ENCODE measurements at regions of chr6 and their contacts with region 1.

Region 1: DNA sequence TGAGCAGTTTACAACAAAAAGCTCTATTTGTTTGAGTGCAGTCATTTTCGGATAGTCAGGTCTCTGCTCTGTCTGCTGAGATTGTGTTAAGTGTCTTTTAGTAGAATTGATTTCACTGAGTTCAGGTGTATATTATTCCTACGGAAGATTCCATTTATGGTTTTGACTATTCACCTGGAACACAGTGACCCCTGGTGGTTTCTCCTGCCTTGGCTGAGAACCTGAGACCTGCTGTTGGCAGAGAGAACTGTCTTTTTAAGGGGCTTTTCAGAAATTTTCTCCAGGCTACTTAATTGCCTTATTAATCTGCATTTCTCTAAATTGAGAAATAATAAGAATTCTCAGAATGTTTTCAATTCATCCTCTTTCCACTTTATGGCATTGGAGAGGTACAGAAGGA is 508.0 kb downstream of the TBC1D32 start:
- DNase-seq: peak; percentile 37 to 42
- H3K4me3 ChIP-seq: no peak overlapping the region
- H3K27ac ChIP-seq: no peak overlapping the region
- H3K4me1 ChIP-seq: no peaks in the 10 kb centered on the region
- H3K27me3 ChIP-seq: no peaks in the 10 kb centered on the region
- CTCF ChIP-seq: peak; percentile 93

Region 2: GRCh38 chr6:119129148-119129967 is 1696.9 kb before region 1 on chr6:
- CTCF ChIA-PET with region 1: no interaction called
- POLR2A ChIA-PET with region 1: no interaction called
- intact Hi-C with region 1: loop called (anchors 5 kb)
- DNase-seq: peak; percentile 20 to 68
- H3K4me3 ChIP-seq: 0 out of 2 replicates have a peak overlapping the region, but pooled peaks have one; percentile 2
- H3K27ac ChIP-seq: peak overlapping the region; percentile 55
- H3K4me1 ChIP-seq: peaks cover 35% of the 10 kb centered on the region
- H3K27me3 ChIP-seq: no peaks in the 10 kb centered on the region
- CTCF ChIP-seq: peak; percentile 96

Region 3: DNA sequence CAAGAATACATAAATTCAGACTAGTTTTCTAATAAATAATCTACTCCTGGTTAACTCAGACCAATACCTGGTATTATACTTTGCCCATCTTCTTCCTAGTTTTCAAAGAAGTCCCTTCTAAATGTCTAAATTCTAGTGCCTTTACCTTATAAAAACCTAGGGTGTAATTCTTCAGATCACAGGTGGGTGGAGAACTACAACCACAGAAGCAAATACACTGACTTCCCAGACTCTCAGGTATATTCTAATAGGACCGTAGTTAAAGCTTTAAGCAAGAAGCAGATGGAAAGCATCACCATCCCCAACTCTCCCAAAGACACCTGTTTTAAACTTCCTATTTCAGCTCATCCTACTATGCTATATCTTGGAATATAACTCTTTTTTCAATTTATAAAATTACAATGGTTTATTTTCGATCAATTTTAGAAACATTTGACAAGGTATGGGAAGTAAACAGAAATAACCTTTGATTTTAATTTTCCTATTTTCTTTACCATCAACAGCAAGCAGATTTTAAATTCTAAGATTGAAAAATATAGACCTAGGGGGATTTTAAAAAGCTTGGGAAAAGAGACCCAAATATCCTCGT is 1492.5 kb before region 1 on chr6:
- CTCF ChIA-PET with region 1: no interaction called
- POLR2A ChIA-PET with region 1: no interaction called
- intact Hi-C with region 1: loop called (anchors 5 kb)
- DNase-seq: no peak
- H3K4me3 ChIP-seq: no peak overlapping the region
- H3K27ac ChIP-seq: no peak overlapping the region
- H3K4me1 ChIP-seq: no peaks in the 10 kb centered on the region
- H3K27me3 ChIP-seq: no peaks in the 10 kb centered on the region
- CTCF ChIP-seq: peak; percentile 93

Region 4: GRCh38 chr6:119742188-119742803 is 1084.0 kb before region 1 on chr6:
- CTCF ChIA-PET with region 1: no interaction called
- POLR2A ChIA-PET with region 1: no interaction called
- intact Hi-C with region 1: loop called (anchors 2 kb)
- DNase-seq: peak in 1 of 2 experiments; percentile 45
- H3K4me3 ChIP-seq: peak overlapping the region; percentile 12; the same call in 1 of the 2 replicates
- H3K27ac ChIP-seq: no peak overlapping the region
- H3K4me1 ChIP-seq: no peaks in the 10 kb centered on the region
- H3K27me3 ChIP-seq: no peaks in the 10 kb centered on the region
- CTCF ChIP-seq: peak; percentile 99

Region 5: DNA sequence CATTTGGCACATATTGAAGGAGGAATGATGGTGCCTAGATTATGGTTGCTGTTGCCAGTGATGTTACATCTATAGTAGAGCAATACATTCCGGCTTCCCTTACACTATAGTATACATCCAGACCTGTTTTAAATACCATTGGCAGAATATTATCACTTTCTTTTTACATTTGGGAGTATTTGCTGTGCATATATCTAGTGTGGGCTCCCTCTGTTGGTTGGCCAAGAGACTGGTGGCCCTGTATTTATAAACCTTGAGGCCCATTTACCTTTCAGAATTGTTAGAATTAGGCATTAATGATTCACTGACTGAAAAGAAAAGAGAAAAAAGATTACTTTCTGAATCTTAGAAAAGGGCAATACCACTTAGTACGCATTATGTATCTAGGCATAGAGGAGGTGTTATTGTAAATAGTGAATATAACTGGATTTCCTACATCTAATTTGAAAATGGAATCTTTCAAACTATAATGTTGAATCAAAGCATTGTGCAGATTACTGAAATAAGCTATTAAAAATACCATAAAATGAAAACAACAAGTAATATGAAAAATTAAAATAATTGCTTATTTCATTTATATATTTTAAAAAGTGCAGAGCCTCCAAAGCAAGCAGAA is 847.9 kb before region 1 on chr6:
- CTCF ChIA-PET with region 1: no interaction called
- POLR2A ChIA-PET with region 1: no interaction called
- intact Hi-C with region 1: loop called (anchors 5 kb)
- DNase-seq: no peak
- H3K4me3 ChIP-seq: no peak overlapping the region
- H3K27ac ChIP-seq: no peak overlapping the region
- H3K4me1 ChIP-seq: no peaks in the 10 kb centered on the region
- H3K27me3 ChIP-seq: no peaks in the 10 kb centered on the region
- CTCF ChIP-seq: peak; percentile 81

Region 6: GRCh38 chr6:120378582-120379220 is 447.6 kb before region 1 on chr6:
- CTCF ChIA-PET with region 1: no interaction called
- POLR2A ChIA-PET with region 1: no interaction called
- intact Hi-C with region 1: loop called (anchors 2 kb)
- DNase-seq: peak in 1 of 2 experiments; percentile 47
- H3K4me3 ChIP-seq: no peak overlapping the region
- H3K27ac ChIP-seq: no peak overlapping the region
- H3K4me1 ChIP-seq: no peaks in the 10 kb centered on the region
- H3K27me3 ChIP-seq: no peaks in the 10 kb centered on the region
- CTCF ChIP-seq: peak; percentile 92